A673 (cell line): ENCODE measurements at regions of chr3 and their contacts with region 1.

Region 1: GRCh38 chr3:148379763-148380382 is 317.8 kb upstream of the AGTR1 start:
- DNase-seq: peak; percentile 62
- H3K4me3 ChIP-seq: no peak overlapping the region
- H3K27ac ChIP-seq: no peak overlapping the region
- H3K4me1 ChIP-seq: peaks cover 19% of the 10 kb centered on the region
- H3K27me3 ChIP-seq: no peaks in the 10 kb centered on the region
- CTCF ChIP-seq: peak; percentile 49

Region 2: GRCh38 chr3:148450819-148451218 is 70.9 kb after region 1 on chr3:
- CTCF ChIA-PET with region 1: no interaction called
- POLR2A ChIA-PET with region 1: no interaction called
- intact Hi-C with region 1: loop called (anchors 5 kb)
- DNase-seq: peak; percentile 58
- H3K4me3 ChIP-seq: no peak overlapping the region
- H3K27ac ChIP-seq: no peak overlapping the region
- H3K4me1 ChIP-seq: no peaks in the 10 kb centered on the region
- H3K27me3 ChIP-seq: no peaks in the 10 kb centered on the region
- CTCF ChIP-seq: no peak

Region 3: GRCh38 chr3:148582126-148582525 is 202.3 kb after region 1 on chr3:
- CTCF ChIA-PET with region 1: no interaction called
- POLR2A ChIA-PET with region 1: no interaction called
- intact Hi-C with region 1: no loop called
- DNase-seq: no peak
- H3K4me3 ChIP-seq: no peak overlapping the region
- H3K27ac ChIP-seq: no peak overlapping the region
- H3K4me1 ChIP-seq: no peaks in the 10 kb centered on the region
- H3K27me3 ChIP-seq: no peaks in the 10 kb centered on the region
- CTCF ChIP-seq: no peak

Region 4: GRCh38 chr3:148615385-148615784 is 235.5 kb after region 1 on chr3:
- CTCF ChIA-PET with region 1: no interaction called
- POLR2A ChIA-PET with region 1: no interaction called
- intact Hi-C with region 1: no loop called
- DNase-seq: no peak
- H3K4me3 ChIP-seq: no peak overlapping the region
- H3K27ac ChIP-seq: no peak overlapping the region
- H3K4me1 ChIP-seq: no peaks in the 10 kb centered on the region
- H3K27me3 ChIP-seq: no peaks in the 10 kb centered on the region
- CTCF ChIP-seq: no peak

Region 5: GRCh38 chr3:148631124-148631903 is 251.4 kb after region 1 on chr3:
- CTCF ChIA-PET with region 1: no interaction called
- POLR2A ChIA-PET with region 1: no interaction called
- intact Hi-C with region 1: loop called (anchors 10 kb)
- DNase-seq: peak; percentile 11
- H3K4me3 ChIP-seq: no peak overlapping the region
- H3K27ac ChIP-seq: no peak overlapping the region
- H3K4me1 ChIP-seq: no peaks in the 10 kb centered on the region
- H3K27me3 ChIP-seq: no peaks in the 10 kb centered on the region
- CTCF ChIP-seq: peak; percentile 36; the same call in 1 of the 2 replicates

Region 6: GRCh38 chr3:148718982-148719862 is 339.3 kb after region 1 on chr3:
- CTCF ChIA-PET with region 1: interaction called, 4 read pairs
- POLR2A ChIA-PET with region 1: no interaction called
- intact Hi-C with region 1: loop called (anchors 2 kb)
- DNase-seq: peak; percentile 5
- H3K4me3 ChIP-seq: no peak overlapping the region
- H3K27ac ChIP-seq: no peak overlapping the region
- H3K4me1 ChIP-seq: no peaks in the 10 kb centered on the region
- H3K27me3 ChIP-seq: no peaks in the 10 kb centered on the region
- CTCF ChIP-seq: peak; percentile 49; the same call in 1 of the 2 replicates

Region 7: GRCh38 chr3:148861277-148861869 is 481.5 kb after region 1 on chr3:
- CTCF ChIA-PET with region 1: no interaction called
- POLR2A ChIA-PET with region 1: no interaction called
- intact Hi-C with region 1: loop called (anchors 10 kb)
- DNase-seq: peak; percentile 56
- H3K4me3 ChIP-seq: no peak overlapping the region
- H3K27ac ChIP-seq: no peak overlapping the region
- H3K4me1 ChIP-seq: no peaks in the 10 kb centered on the region
- H3K27me3 ChIP-seq: no peaks in the 10 kb centered on the region
- CTCF ChIP-seq: peak; percentile 71